Caco-2 (cell line): ENCODE measurements at regions of chr16 and their contacts with region 1.

Region 1: DNA sequence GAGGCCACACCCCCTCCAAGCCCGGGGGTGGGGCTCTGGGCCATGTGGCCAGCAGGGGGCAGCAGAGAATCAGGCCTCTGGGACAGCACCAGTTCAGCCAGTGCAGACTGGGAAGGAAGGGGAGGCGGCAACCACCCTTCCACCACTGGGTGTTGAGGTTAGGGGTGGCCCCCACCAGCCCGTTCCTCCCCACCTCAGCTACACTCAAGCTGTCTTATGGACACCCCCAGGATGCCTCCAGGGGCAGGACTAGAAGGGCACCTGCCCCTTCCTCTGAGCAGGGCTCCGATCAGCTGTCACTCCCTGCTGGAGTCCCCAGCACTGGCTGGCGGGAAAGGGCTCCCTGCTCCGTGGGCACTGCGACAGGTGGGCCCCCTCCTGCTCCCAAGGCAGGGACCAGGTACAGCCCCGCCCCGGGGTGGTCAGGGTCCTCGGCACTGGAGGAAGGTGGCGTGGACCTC is 21.8 kb downstream of the KATNB1 start:
- DNase-seq: peak; percentile 89 to 97
- H3K4me3 ChIP-seq: no peak overlapping the region
- H3K4me3 Mint-ChIP-seq: no peak overlapping the region
- H3K27ac Mint-ChIP-seq: no peak overlapping the region
- H3K4me1 ChIP-seq: peaks cover 17% of the 10 kb centered on the region
- H3K4me1 Mint-ChIP-seq: peaks cover 20% of the 10 kb centered on the region
- H3K27me3 ChIP-seq: no peaks in the 10 kb centered on the region
- H3K27me3 Mint-ChIP-seq: no peaks in the 10 kb centered on the region
- CTCF ChIP-seq: peak; percentile 95 to 99

Region 2: DNA sequence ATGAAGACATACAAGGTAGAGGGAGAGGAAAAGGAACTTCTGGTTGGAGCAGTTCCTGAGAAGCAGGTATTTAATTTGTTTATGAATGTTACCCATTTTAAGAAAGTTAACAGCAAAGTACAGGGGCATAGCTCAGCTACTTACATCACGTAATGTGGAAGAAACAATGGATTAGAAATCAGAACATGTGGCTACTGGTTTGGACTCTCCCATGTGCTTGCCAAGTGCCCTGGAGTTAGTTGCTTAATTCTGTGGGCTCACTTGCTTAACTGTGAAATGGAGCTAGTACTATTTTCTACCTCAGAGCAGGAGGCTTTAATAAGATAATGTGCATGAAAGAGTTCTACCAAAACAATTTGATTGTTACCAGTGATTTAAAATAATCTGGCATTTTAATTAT is 543.9 kb before region 1 on chr16:
- CTCF ChIA-PET with region 1: no interaction called
- POLR2A ChIA-PET with region 1: no interaction called
- intact Hi-C with region 1: no loop called
- DNase-seq: no peak
- H3K4me3 ChIP-seq: no peak overlapping the region
- H3K4me3 Mint-ChIP-seq: no peak overlapping the region
- H3K27ac Mint-ChIP-seq: no peak overlapping the region
- H3K4me1 ChIP-seq: no peaks in the 10 kb centered on the region
- H3K4me1 Mint-ChIP-seq: no peaks in the 10 kb centered on the region
- H3K27me3 ChIP-seq: no peaks in the 10 kb centered on the region
- H3K27me3 Mint-ChIP-seq: no peaks in the 10 kb centered on the region
- CTCF ChIP-seq: no peak

Region 3: DNA sequence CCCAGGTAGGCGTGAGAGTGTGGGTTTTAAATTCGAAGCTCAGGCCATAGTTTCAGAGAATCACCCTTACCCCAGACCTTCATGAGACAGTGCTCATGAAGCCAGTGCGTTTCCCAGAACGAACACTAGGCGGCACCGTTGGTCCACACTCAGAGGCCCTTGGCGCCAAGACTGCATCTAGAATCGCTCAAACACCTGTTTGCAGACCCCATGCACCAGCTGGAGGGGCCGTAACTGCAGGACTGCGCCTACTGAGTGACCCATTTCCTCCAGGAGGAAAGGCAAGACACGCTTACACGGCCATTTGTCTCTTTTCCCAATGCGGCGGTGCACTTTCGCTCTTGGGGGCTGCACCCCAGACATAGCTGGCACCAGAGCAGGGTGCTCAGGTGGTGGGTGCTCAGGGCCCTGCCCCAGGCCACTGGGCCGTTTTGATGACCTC is 180.9 kb before region 1 on chr16:
- CTCF ChIA-PET with region 1: no interaction called
- POLR2A ChIA-PET with region 1: no interaction called
- intact Hi-C with region 1: loop called (anchors 1 kb)
- DNase-seq: peak; percentile 74 to 82
- H3K4me3 ChIP-seq: no peak overlapping the region
- H3K4me3 Mint-ChIP-seq: no peak overlapping the region
- H3K27ac Mint-ChIP-seq: no peak overlapping the region
- H3K4me1 ChIP-seq: 0 out of 2 replicates have a peak, but pooled peaks cover 4% of the 10 kb centered on the region
- H3K4me1 Mint-ChIP-seq: no peaks in the 10 kb centered on the region
- H3K27me3 ChIP-seq: no peaks in the 10 kb centered on the region
- H3K27me3 Mint-ChIP-seq: no peaks in the 10 kb centered on the region
- CTCF ChIP-seq: peak; percentile 97

Region 4: GRCh38 chr16:57628008-57628781 is 129.2 kb before region 1 on chr16 and contains the start of gene ADGRG1:
- CTCF ChIA-PET with region 1: no interaction called
- POLR2A ChIA-PET with region 1: no interaction called
- intact Hi-C with region 1: no loop called
- DNase-seq: peak in 1 of 2 experiments; percentile 50
- H3K4me3 ChIP-seq: no peak within 1 kb of the TSS
- H3K4me3 Mint-ChIP-seq: no peak within 1 kb of the TSS
- H3K27ac Mint-ChIP-seq: peak within 1 kb of the TSS; percentile 27
- H3K4me1 ChIP-seq: peaks cover 18% of the 10 kb centered on the region
- H3K4me1 Mint-ChIP-seq: peaks cover 26% of the 10 kb centered on the region
- H3K27me3 ChIP-seq: no peaks in the 10 kb centered on the region
- H3K27me3 Mint-ChIP-seq: no peaks in the 10 kb centered on the region
- CTCF ChIP-seq: no peak
- total RNA-seq, gene ADGRG1: 153 and 195 TPM in 2 replicates

Region 5: GRCh38 chr16:57802341-57803133 is 45.2 kb after region 1 on chr16 and contains the start of gene KIFC3:
- CTCF ChIA-PET with region 1: no interaction called
- POLR2A ChIA-PET with region 1: no interaction called
- intact Hi-C with region 1: loop called (anchors 2 kb)
- DNase-seq: peak; percentile 92 to 94
- H3K4me3 ChIP-seq: peak within 1 kb of the TSS; percentile 80
- H3K4me3 Mint-ChIP-seq: peak within 1 kb of the TSS; percentile 92
- H3K27ac Mint-ChIP-seq: peak within 1 kb of the TSS; percentile 95
- H3K4me1 ChIP-seq: peaks cover 78% of the 10 kb centered on the region
- H3K4me1 Mint-ChIP-seq: peaks cover 66% of the 10 kb centered on the region
- H3K27me3 ChIP-seq: no peaks in the 10 kb centered on the region
- H3K27me3 Mint-ChIP-seq: no peaks in the 10 kb centered on the region
- CTCF ChIP-seq: no peak
- total RNA-seq, gene KIFC3: 103 and 108 TPM in 2 replicates

Region 6: GRCh38 chr16:57871456-57871855 is 114.1 kb after region 1 on chr16:
- CTCF ChIA-PET with region 1: no interaction called
- POLR2A ChIA-PET with region 1: no interaction called
- intact Hi-C with region 1: no loop called
- DNase-seq: no peak
- H3K4me3 ChIP-seq: no peak overlapping the region
- H3K4me3 Mint-ChIP-seq: no peak overlapping the region
- H3K27ac Mint-ChIP-seq: no peak overlapping the region
- H3K4me1 ChIP-seq: no peaks in the 10 kb centered on the region
- H3K4me1 Mint-ChIP-seq: peaks cover 13% of the 10 kb centered on the region
- H3K27me3 ChIP-seq: no peaks in the 10 kb centered on the region
- H3K27me3 Mint-ChIP-seq: no peaks in the 10 kb centered on the region
- CTCF ChIP-seq: no peak

Region 7: DNA sequence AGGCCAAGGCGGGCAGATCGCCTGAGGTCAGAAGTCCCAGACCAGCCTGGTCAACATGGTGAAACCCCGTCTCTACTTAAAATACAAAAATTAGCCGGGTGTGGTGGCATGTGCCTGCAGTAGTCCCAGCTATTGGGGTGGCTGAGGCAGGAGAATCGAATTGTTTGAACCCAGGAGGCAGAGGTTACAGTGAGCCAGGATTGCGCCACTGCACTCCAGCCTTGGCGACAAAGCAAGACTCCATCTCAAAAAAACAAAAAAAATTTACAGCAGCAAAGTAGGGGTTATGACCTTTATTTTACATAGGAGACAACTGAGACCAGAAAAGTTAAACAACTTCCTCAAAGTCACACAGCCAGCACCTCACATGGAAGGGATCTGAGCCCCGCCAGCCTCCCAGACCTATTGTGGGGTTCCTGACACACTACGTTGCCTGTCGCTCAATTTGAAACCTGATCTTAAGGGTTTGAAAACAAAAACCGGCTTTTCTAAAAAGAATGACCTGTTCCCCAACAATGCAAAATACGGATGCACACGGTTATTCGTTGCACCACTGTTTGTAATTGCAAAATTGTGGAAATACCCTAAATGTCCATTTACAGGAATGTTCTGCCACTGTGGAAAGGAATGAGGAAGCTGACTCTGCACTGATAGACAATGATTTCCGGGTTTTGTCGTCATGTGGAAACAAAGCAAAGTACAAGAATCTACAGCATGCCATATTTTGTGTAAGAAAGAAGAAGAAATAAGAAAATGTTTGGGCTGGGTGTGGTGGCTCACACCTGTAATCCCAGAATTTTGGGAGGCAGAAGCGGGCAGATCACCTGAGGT is 136.4 kb after region 1 on chr16:
- CTCF ChIA-PET with region 1: no interaction called
- POLR2A ChIA-PET with region 1: no interaction called
- intact Hi-C with region 1: loop called (anchors 5 kb)
- DNase-seq: peak; percentile 73 to 74
- H3K4me3 ChIP-seq: no peak overlapping the region
- H3K4me3 Mint-ChIP-seq: peak overlapping the region; percentile 61
- H3K27ac Mint-ChIP-seq: peak overlapping the region; percentile 88
- H3K4me1 ChIP-seq: peaks cover 33% of the 10 kb centered on the region
- H3K4me1 Mint-ChIP-seq: peaks cover 42% of the 10 kb centered on the region
- H3K27me3 ChIP-seq: no peaks in the 10 kb centered on the region
- H3K27me3 Mint-ChIP-seq: no peaks in the 10 kb centered on the region
- CTCF ChIP-seq: no peak

Region 8: GRCh38 chr16:57977418-57978069 is 220.2 kb after region 1 on chr16:
- CTCF ChIA-PET with region 1: no interaction called
- POLR2A ChIA-PET with region 1: no interaction called
- intact Hi-C with region 1: loop called (anchors 1 kb)
- DNase-seq: peak in 1 of 2 experiments; percentile 41
- H3K4me3 ChIP-seq: no peak overlapping the region
- H3K4me3 Mint-ChIP-seq: no peak overlapping the region
- H3K27ac Mint-ChIP-seq: no peak overlapping the region
- H3K4me1 ChIP-seq: peaks cover 10% of the 10 kb centered on the region
- H3K4me1 Mint-ChIP-seq: peaks cover 14% of the 10 kb centered on the region
- H3K27me3 ChIP-seq: no peaks in the 10 kb centered on the region
- H3K27me3 Mint-ChIP-seq: no peaks in the 10 kb centered on the region
- CTCF ChIP-seq: peak in 1 of 2 experiments; percentile 10

Region 9: GRCh38 chr16:58000706-58001676 is 243.6 kb after region 1 on chr16 and contains the start of gene USB1:
- CTCF ChIA-PET with region 1: no interaction called
- POLR2A ChIA-PET with region 1: no interaction called
- intact Hi-C with region 1: loop called (anchors 1 kb)
- DNase-seq: peak; percentile 92 to 97
- H3K4me3 ChIP-seq: peak within 1 kb of the TSS; percentile 88
- H3K4me3 Mint-ChIP-seq: peak within 1 kb of the TSS; percentile 96
- H3K27ac Mint-ChIP-seq: peak within 1 kb of the TSS; percentile 73
- H3K4me1 ChIP-seq: peaks cover 17% of the 10 kb centered on the region
- H3K4me1 Mint-ChIP-seq: no peaks in the 10 kb centered on the region
- H3K27me3 ChIP-seq: no peaks in the 10 kb centered on the region
- H3K27me3 Mint-ChIP-seq: no peaks in the 10 kb centered on the region
- CTCF ChIP-seq: peak; percentile 76 to 97
- total RNA-seq, gene USB1: 90.5 and 91.2 TPM in 2 replicates